Activated naive CD4-positive, alpha-beta T cell treated with anti-CD3 and anti-CD28 coated beads, Interleukin-2, amount 10 ng/mL, durations not matched to agents 7 days and 5 days (primary cell): ENCODE measurements at regions of chr3 and their contacts with region 1.

Region 1: GRCh38 chr3:98022978-98023820 is 11.9 kb downstream of the GABRR3 start:
- DNase-seq: peak; percentile 94
- H3K4me3 Mint-ChIP-seq: no peak overlapping the region
- H3K27ac Mint-ChIP-seq: peak overlapping the region; percentile 9
- H3K4me1 Mint-ChIP-seq: peaks cover 18% of the 10 kb centered on the region
- H3K27me3 Mint-ChIP-seq: peaks cover 5% of the 10 kb centered on the region

Region 2: DNA sequence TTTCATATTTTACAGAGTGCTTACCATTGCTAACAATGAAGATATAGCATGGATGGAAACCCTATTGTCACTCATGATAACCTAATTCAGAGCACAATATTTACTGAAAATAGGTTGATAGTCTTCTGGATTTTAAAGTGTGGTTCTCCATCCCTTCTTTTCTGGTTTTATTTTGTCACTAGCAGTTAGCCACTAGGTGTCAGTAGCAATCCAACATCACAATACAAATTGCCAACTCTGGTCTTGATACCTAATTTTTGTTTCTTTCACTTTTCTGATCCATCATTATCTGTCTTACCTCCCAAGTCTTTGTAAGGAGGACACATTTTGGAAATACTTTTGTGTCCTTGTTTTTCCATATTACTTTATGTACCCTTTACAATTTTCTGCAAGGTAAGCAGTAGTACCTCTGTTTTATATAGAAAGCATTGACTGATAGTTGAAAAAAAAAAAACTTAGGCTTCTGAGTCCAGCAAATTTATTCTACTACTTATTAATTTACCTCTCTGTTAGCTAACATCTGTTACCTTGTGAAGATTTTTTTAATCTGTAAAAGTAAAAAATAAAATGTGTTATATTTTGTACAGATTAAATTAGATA is 229.7 kb before region 1 on chr3:
- CTCF ChIA-PET with region 1: interaction called, 84 read pairs
- DNase-seq: no peak
- H3K4me3 Mint-ChIP-seq: no peak overlapping the region
- H3K27ac Mint-ChIP-seq: no peak overlapping the region
- H3K4me1 Mint-ChIP-seq: no peaks in the 10 kb centered on the region
- H3K27me3 Mint-ChIP-seq: no peaks in the 10 kb centered on the region

Region 3: DNA sequence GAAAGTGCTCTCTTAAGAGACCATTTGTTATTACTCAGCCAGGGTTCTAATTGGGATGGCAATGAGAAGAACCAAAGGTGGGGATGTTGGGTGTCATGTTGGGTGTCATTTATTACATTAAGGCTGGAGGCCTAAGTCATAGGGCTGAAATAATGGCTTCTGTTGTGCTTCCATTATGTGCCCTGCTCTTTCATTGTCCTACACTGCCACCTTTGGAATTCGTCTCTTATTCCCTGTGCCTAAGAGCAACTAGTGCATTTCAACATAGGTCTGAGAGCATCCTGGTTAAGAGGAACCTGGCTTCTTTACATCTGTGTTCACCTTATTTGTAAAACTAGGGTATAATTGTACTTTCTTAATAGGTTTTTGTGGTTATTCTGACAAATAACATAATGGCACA is 83.2 kb before region 1 on chr3:
- CTCF ChIA-PET with region 1: interaction called, 13 read pairs
- DNase-seq: no peak
- H3K4me3 Mint-ChIP-seq: no peak overlapping the region
- H3K27ac Mint-ChIP-seq: no peak overlapping the region
- H3K4me1 Mint-ChIP-seq: no peaks in the 10 kb centered on the region
- H3K27me3 Mint-ChIP-seq: no peaks in the 10 kb centered on the region

Region 4: GRCh38 chr3:97971677-97972567 is 51.3 kb before region 1 on chr3 and contains the start of gene RIOX2:
- CTCF ChIA-PET with region 1: interaction called, 74 read pairs
- DNase-seq: peak; percentile 87
- H3K4me3 Mint-ChIP-seq: peak within 1 kb of the TSS; percentile 80
- H3K27ac Mint-ChIP-seq: peak within 1 kb of the TSS; percentile 96
- H3K4me1 Mint-ChIP-seq: peaks cover 77% of the 10 kb centered on the region
- H3K27me3 Mint-ChIP-seq: peaks cover 4% of the 10 kb centered on the region

Region 5: DNA sequence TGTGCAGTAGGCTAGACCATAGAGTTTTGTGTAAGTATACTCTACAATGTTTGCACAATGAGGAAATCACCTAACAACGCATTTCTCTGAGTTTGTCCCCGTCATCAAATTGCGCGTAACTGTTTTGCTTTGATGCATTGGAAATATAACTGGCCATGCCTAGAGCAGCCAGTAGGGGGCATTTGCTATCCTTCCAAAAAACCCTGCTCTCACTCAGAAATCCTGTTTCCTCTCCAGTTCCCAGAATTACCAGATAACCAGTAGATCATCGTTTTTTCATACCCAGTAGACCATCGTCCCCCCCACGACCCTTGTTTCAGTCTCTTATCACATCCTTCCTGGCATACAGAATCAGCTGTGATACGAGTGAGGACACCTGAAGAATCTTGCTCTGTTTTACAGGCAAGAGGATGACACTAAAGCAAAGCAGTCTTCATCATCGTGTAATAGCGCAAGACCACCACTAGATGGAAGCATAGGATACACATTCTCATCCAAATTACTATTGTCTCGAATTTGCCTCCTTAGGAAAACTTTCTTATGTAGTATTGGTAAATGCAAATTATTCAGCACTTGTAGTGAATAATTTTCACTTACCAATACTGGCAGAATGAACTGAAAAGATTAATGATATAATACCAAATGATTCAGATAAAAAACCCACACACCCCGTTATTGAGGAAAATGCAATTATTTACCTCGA is 16.3 kb after region 1 on chr3:
- CTCF ChIA-PET with region 1: interaction called, 25 read pairs
- DNase-seq: peak; percentile 84
- H3K4me3 Mint-ChIP-seq: peak overlapping the region; percentile 80
- H3K27ac Mint-ChIP-seq: peak overlapping the region; percentile 90
- H3K4me1 Mint-ChIP-seq: peaks cover 22% of the 10 kb centered on the region
- H3K27me3 Mint-ChIP-seq: peaks cover 31% of the 10 kb centered on the region